ENCODE measurements at regions of chr1 and their contacts with region 1.

Region 1: DNA sequence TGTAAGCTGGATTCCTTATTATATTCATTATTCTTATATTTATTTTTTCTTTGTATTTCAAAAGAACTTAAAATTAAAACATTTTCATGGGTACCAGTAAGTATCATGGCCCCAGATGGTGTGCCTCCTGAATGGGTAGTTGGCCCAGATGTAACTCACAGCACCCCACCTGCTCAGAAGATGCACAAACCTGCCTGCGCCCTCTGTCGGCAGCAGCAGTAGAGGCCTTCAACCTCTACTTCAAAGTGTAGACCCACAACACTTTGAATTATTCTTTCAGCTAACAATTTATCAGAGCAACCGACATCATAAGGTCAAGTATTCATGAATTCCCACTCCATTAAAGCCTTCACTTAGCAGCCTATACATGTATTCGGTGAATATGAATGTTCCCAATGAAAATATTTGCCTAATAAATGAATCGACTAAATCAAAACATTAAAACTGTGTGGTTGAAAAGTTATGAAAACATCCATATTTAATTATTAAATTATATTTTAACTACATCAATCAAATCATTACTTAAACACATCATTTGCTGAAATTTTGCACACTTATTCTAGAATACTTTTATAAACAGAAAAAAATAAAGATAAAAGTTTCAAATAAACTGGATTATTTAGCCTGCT is 25.4 kb downstream of the PIGM start:
- DNase-seq: peak; percentile 23
- H3K4me3 ChIP-seq: no peak overlapping the region
- H3K27ac ChIP-seq: no peak overlapping the region
- H3K27me3 ChIP-seq: peaks cover 7% of the 10 kb centered on the region
- CTCF ChIP-seq: peak; percentile 99

Region 2: GRCh38 chr1:159798893-159799292 is 207.5 kb before region 1 on chr1:
- CTCF ChIA-PET with region 1: interaction called, 116 read pairs
- POLR2A ChIA-PET with region 1: no interaction called
- DNase-seq: peak; percentile 66
- H3K4me3 ChIP-seq: no peak overlapping the region
- H3K27ac ChIP-seq: no peak overlapping the region
- H3K27me3 ChIP-seq: peaks cover 26% of the 10 kb centered on the region
- CTCF ChIP-seq: peak; percentile 81

Region 3: DNA sequence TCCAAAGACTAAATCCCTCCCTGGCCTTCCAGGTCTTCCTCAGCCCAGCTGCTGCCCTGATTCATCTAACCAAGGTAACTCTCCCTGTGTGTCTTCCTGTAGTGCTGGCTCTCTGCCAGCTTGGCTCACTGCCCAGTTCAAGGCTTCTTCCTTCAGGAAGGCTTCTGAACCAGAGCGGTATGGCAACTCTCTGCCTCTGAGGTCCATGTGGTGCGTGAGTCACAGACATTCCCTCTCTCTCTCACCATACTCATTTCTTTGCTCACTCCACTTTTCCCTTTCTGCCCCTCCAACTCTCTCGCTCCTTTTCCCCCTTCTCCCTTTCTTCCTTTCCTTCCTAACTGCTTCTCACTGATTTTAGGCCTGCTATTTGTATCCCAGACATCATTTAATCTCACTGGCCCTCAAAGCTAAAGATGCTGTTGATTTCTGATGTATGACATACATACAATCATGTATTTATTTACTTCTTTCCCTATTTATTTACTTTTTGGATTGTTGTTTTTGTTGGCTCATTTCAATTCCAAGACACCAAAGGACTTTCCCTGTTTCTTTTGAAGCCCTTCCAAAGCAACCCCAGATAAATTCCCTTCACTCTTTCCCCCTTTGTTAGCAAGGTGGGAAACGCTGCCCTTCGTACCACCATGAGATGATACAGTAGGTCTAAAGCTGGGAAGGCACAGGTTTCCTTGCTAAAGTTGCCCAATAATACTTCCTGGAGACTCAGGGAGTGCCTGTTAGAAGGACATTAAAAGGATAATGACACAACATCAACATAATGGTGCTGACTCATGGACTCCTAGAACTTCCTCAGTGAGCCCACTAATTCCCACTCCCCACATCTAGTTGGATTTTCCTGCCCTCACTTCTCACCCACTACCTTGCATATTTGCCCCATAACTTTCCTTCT is 124.2 kb before region 1 on chr1:
- CTCF ChIA-PET with region 1: interaction called, 10 read pairs
- POLR2A ChIA-PET with region 1: no interaction called
- DNase-seq: peak; percentile 95
- H3K4me3 ChIP-seq: no peak overlapping the region
- H3K27ac ChIP-seq: peak overlapping the region; percentile 59
- H3K27me3 ChIP-seq: no peaks in the 10 kb centered on the region
- CTCF ChIP-seq: no peak

Region 4: DNA sequence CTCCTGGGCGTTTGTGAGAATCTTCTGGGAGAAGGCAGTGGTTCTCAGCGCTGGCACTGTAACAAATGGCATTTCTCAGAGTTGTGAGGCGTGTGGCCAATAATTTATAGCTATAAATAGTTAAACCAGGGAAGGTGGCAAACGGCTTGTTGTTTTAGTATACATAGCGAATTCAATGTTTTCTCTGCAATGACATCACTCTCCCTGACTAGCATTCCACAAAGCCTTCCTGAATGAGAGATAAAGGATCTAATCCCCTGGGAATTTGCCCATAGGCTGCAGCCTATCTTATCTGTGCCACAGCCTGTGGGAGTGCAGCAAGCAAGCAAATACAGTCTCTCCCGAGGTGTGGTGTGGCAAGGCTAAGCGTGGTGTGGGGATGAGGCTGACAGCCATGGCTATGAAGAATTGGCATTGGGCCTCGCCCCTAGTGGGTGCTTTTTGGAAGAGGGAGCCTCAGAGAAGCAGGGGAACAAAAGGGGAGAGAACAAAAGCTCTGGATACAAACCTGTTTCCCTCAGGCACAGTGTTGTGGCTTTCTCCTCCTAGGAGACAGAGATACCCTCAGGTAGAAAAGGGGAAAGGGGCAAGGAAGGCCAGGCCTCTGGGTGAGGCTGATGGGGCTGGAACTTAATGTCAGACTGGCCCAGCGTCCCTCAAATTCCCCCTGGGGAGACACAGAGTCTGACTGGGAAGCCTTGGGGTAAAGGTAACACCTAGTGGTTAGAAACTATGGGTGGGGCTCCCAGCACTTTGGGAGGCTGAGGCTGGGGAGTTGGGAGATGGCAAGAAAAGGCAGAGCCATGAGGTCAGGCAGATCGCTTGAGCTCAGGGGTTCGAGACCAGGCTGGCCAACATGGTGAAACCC is 90.0 kb before region 1 on chr1:
- CTCF ChIA-PET with region 1: interaction called, 91 read pairs
- POLR2A ChIA-PET with region 1: no interaction called
- DNase-seq: no peak
- H3K4me3 ChIP-seq: no peak overlapping the region
- H3K27ac ChIP-seq: peak overlapping the region; percentile 73
- H3K27me3 ChIP-seq: no peaks in the 10 kb centered on the region
- CTCF ChIP-seq: no peak

Region 5: GRCh38 chr1:159945483-159946241 is 60.8 kb before region 1 on chr1 and contains the start of gene IGSF9:
- CTCF ChIA-PET with region 1: interaction called, 380 read pairs
- POLR2A ChIA-PET with region 1: no interaction called
- DNase-seq: no peak
- H3K4me3 ChIP-seq: peak within 1 kb of the TSS; percentile 47
- H3K27ac ChIP-seq: no peak within 1 kb of the TSS
- H3K27me3 ChIP-seq: peaks cover 55% of the 10 kb centered on the region
- CTCF ChIP-seq: peak; percentile 43
- polyA plus RNA-seq, gene IGSF9: not detected in 2 replicates

Region 6: GRCh38 chr1:159970932-159971342 is 35.5 kb before region 1 on chr1:
- CTCF ChIA-PET with region 1: interaction called, 28 read pairs
- POLR2A ChIA-PET with region 1: no interaction called
- DNase-seq: no peak
- H3K4me3 ChIP-seq: no peak overlapping the region
- H3K27ac ChIP-seq: no peak overlapping the region
- H3K27me3 ChIP-seq: peaks cover 17% of the 10 kb centered on the region
- CTCF ChIP-seq: no peak

Region 7: GRCh38 chr1:160018900-160019299 is 12.5 kb after region 1 on chr1:
- CTCF ChIA-PET with region 1: interaction called, 52 read pairs
- POLR2A ChIA-PET with region 1: no interaction called
- DNase-seq: no peak
- H3K4me3 ChIP-seq: no peak overlapping the region
- H3K27ac ChIP-seq: no peak overlapping the region
- H3K27me3 ChIP-seq: peaks cover 8% of the 10 kb centered on the region
- CTCF ChIP-seq: no peak

Region 8: GRCh38 chr1:160296036-160296435 is 289.6 kb after region 1 on chr1:
- CTCF ChIA-PET with region 1: no interaction called
- POLR2A ChIA-PET with region 1: no interaction called
- DNase-seq: no peak
- H3K4me3 ChIP-seq: no peak overlapping the region
- H3K27ac ChIP-seq: no peak overlapping the region
- H3K27me3 ChIP-seq: no peaks in the 10 kb centered on the region
- CTCF ChIP-seq: no peak

Measured in AG04450 (cell line).